ENCODE measurements at regions of chr2 and their contacts with region 1.

Region 1: DNA sequence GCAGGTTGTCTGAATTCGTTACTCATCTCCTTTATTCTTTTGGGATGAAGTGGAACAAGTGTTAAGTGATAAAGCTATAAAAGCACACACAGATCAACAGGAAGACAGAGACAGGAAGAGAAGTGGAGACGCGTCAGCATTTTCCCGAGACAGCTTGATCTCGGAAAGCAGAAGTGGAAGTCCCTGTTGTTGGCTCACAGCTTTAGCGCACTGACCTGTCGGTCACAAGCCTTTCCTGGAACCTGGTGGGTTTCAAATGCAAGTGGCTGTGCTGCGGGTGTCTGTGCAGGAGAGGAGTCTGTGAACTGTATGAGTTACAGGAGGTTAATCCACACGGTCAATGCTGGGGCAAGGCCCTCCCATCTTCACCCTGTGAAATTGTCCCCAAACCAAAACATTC is 116.6 kb upstream of the PELI1 start:
- DNase-seq: peak in 4 of 9 experiments; percentile 11 to 56 (median 29)
- ATAC-seq: peak; percentile 29
- H3K4me3 ChIP-seq: peak overlapping the region in 1 of 2 experiments; percentile 34
- H3K4me3 Mint-ChIP-seq: peak overlapping the region; percentile 69
- H3K27ac ChIP-seq: no peak overlapping the region
- H3K27ac Mint-ChIP-seq: peak overlapping the region; percentile 78
- H3K4me1 ChIP-seq: peaks cover 8% of the 10 kb centered on the region
- H3K4me1 Mint-ChIP-seq: peaks cover 7% of the 10 kb centered on the region
- H3K27me3 ChIP-seq: no peaks in the 10 kb centered on the region
- H3K27me3 Mint-ChIP-seq: no peaks in the 10 kb centered on the region
- CTCF ChIP-seq: no peak

Region 2: GRCh38 chr2:64214281-64215115 is 46.3 kb before region 1 on chr2:
- CTCF ChIA-PET with region 1: no interaction called
- POLR2A ChIA-PET with region 1: no interaction called
- intact Hi-C with region 1: loop called in 1 of 2 experiments (anchors 1 kb)
- DNase-seq: peak in 3 of 9 experiments; percentile 25 to 51 (median 49)
- ATAC-seq: peak; percentile 70
- H3K4me3 ChIP-seq: no peak overlapping the region
- H3K4me3 Mint-ChIP-seq: peak overlapping the region; percentile 52
- H3K27ac ChIP-seq: peak overlapping the region in 1 of 2 experiments; percentile 13
- H3K27ac Mint-ChIP-seq: peak overlapping the region; percentile 77
- H3K4me1 ChIP-seq: peaks cover 18% of the 10 kb centered on the region
- H3K4me1 Mint-ChIP-seq: peaks cover 30% of the 10 kb centered on the region
- H3K27me3 ChIP-seq: no peaks in the 10 kb centered on the region
- H3K27me3 Mint-ChIP-seq: no peaks in the 10 kb centered on the region
- CTCF ChIP-seq: no peak

Region 3: DNA sequence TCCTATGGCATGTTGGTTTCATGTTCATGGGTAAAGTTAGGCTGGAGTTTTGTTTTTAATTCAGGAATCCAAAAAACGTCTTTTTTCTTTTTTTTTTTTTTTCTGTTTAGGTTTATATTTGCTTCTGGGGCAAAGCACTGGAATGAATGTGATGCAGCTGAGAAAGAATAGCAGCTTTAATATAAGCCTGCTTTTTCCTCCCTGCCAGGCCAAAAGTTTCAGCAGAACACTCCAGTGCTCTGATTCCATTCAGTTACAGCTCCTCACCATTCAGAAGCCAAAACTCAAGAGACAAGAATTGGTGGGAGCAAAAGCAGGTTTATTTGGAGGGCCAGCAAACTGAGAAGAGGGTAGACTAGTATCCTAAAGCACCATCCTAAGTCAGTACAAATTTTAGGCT is 13.9 kb before region 1 on chr2:
- CTCF ChIA-PET with region 1: interaction called, 5 read pairs
- POLR2A ChIA-PET with region 1: interaction called, 5 read pairs
- intact Hi-C with region 1: loop called in 1 of 2 experiments (anchors 2 kb)
- DNase-seq: no peak
- ATAC-seq: no peak
- H3K4me3 ChIP-seq: no peak overlapping the region
- H3K4me3 Mint-ChIP-seq: no peak overlapping the region
- H3K27ac ChIP-seq: no peak overlapping the region
- H3K27ac Mint-ChIP-seq: no peak overlapping the region
- H3K4me1 ChIP-seq: no peaks in the 10 kb centered on the region
- H3K4me1 Mint-ChIP-seq: no peaks in the 10 kb centered on the region
- H3K27me3 ChIP-seq: no peaks in the 10 kb centered on the region
- H3K27me3 Mint-ChIP-seq: no peaks in the 10 kb centered on the region
- CTCF ChIP-seq: no peak

Measured in CD8-positive, alpha-beta T cell (primary cell).